Sigmoid colon (tissue), 7 donors: ENCODE measurements at regions of chr2 and their contacts with region 1.

Region 1: DNA sequence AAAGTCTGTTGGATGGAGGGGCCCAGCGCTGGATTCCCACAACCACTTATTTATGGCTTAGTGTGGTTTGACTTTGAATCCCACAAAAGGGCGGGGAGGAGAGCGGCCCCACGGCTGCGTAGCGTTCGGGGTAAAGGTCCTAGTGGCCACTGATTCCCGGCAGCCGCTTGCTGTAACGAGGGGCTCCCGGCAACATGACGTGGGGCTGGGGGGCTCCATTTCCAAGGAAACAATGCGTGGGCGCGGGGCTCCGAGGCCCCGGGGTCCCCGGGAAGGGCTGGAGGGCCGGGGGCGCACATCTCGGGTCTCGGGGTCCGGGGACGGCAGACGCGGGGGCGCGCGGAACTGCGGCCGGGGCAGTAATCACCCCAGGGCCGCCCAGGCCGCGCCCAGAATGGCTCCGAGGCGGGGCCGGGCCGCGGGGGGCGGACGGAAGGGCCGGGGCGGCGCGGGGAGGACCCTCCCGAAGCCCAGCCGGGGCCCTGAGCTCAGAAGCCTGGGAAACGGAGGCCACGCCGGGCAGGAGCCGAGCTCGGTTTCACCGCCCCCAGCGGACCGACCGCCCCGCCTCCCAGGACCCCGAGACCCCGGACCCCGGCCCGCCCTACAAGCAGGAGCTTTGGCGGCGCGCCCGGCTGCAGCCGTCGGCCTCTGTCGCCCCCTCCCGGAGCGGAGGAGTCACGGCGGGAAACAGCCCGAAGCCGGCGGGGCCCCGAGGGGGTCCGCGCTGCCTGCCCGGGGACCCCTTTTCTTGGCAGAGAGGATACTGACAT is 11.9 kb upstream of the MLPH start:
- DNase-seq: peak; percentile 95
- H3K4me3 ChIP-seq: peak overlapping the region; percentile 45 to 85 (median 66)
- H3K27ac ChIP-seq: peak overlapping the region; percentile 85 to 96 (median 91)
- H3K4me1 ChIP-seq: peaks cover 0 to 44% (median 28%) of the 10 kb centered on the region in 4 donors
- H3K27me3 ChIP-seq: no peaks in the 10 kb centered on the region
- CTCF ChIP-seq: peak; percentile 87 to 97 (median 89)
- EP300 ChIP-seq: no peak
- POLR2A ChIP-seq: peak; percentile 4 to 25

Region 2: GRCh38 chr2:237092920-237093781 is 382.0 kb before region 1 on chr2:
- intact Hi-C with region 1: loop called (anchors 2 kb)
- DNase-seq: peak; percentile 88
- H3K4me3 ChIP-seq: no peak overlapping the region
- H3K27ac ChIP-seq: peak overlapping the region; percentile 68 to 82 (median 80)
- H3K4me1 ChIP-seq: peaks cover 0 to 57% (median 29%) of the 10 kb centered on the region in 4 donors
- H3K27me3 ChIP-seq: no peaks in the 10 kb centered on the region
- CTCF ChIP-seq: peak; percentile 55 to 81 (median 68)
- EP300 ChIP-seq: peak in 2 of 4 donors; percentile 37 to 51
- POLR2A ChIP-seq: no peak

Region 3: DNA sequence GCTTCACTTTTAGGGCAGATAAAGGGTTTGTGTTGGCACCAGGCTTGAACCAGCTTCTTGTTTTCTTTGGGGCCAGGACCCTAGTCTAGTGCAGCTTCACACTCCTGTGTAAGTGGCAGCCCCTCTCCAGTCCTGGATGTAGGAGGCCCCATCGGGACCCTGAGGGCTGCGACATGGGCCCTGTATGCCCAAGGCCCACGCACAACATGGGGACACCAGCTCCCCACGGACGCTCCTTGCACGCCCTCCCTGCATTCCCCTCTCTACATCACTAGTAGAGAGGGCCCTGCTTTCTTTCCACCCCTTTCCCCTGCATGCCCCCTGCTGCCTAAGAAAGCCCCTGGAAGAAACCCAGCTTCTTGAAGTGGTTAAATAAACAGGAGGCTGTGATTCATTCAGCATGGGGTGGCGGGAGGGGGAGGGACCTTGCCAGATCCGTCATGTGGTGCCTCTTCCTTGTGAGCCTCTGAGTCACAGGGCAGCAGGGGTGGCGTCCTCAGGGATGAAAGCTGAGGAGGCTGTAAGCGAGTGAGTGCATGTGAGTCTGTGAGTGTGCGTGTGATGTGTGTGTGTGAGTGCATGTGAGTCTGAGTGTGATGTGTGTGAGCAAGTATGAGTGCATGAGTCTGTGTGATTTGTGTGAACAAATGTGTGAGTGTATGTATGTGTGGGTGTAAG is 347.0 kb before region 1 on chr2:
- intact Hi-C with region 1: loop called (anchors 2 kb)
- DNase-seq: peak; percentile 99
- H3K4me3 ChIP-seq: peak overlapping the region in 2 of 4 donors; percentile 2 to 14
- H3K27ac ChIP-seq: peak overlapping the region; percentile 58 to 93 (median 87)
- H3K4me1 ChIP-seq: peaks cover 0 to 71% (median 54%) of the 10 kb centered on the region in 4 donors
- H3K27me3 ChIP-seq: no peaks in the 10 kb centered on the region
- CTCF ChIP-seq: no peak
- EP300 ChIP-seq: peak in 3 of 4 donors; percentile 88 to 99 (median 89)
- POLR2A ChIP-seq: no peak

Region 4: DNA sequence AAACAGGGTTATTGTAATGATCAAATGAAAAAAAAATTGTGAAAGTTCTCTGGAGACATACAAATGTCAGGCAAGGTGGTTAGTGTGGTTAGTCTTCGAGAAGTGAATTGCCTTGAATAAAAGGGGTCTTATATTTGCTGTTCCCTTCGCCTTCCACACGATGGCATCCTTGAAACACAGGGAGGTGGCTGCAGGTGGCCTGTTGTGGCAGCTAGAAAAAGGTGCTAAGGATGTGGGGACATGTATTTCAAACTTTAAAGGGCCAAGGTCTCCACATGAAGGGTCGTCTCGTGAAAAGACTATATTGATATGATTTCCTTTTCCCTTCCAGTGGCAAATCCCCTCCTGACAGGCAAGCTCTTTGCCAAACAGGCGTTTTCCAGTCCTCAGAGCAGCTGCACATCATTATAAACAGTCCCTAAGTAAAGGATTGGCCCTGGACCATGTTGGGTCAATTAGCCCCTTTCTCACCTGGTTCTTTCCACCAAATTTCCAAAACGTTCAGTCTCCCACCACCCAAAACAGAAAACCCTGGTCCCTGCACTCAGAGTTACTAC is 321.0 kb before region 1 on chr2:
- intact Hi-C with region 1: loop called (anchors 2 kb)
- DNase-seq: no peak
- H3K4me3 ChIP-seq: no peak overlapping the region
- H3K27ac ChIP-seq: peak overlapping the region in 3 of 4 donors; percentile 17 to 75 (median 73)
- H3K4me1 ChIP-seq: peaks cover 0 to 39% (median 25%) of the 10 kb centered on the region in 4 donors
- H3K27me3 ChIP-seq: no peaks in the 10 kb centered on the region
- CTCF ChIP-seq: peak; percentile 40 to 63 (median 45)
- EP300 ChIP-seq: no peak
- POLR2A ChIP-seq: no peak

Region 5: GRCh38 chr2:237171396-237171795 is 303.7 kb before region 1 on chr2:
- intact Hi-C with region 1: loop called (anchors 5 kb)
- DNase-seq: peak; percentile 83
- H3K4me3 ChIP-seq: peak overlapping the region in 3 of 4 donors; percentile 2 to 21 (median 9)
- H3K27ac ChIP-seq: peak overlapping the region; percentile 64 to 78 (median 74)
- H3K4me1 ChIP-seq: peaks cover 0 to 24% (median 21%) of the 10 kb centered on the region in 4 donors
- H3K27me3 ChIP-seq: no peaks in the 10 kb centered on the region
- CTCF ChIP-seq: peak in 1 of 4 experiments; percentile 13
- EP300 ChIP-seq: no peak
- POLR2A ChIP-seq: no peak

Region 6: GRCh38 chr2:237298151-237299118 is 176.7 kb before region 1 on chr2:
- intact Hi-C with region 1: loop called (anchors 5 kb)
- DNase-seq: no peak
- H3K4me3 ChIP-seq: no peak overlapping the region
- H3K27ac ChIP-seq: peak overlapping the region; percentile 11 to 90 (median 86)
- H3K4me1 ChIP-seq: peaks cover 0 to 76% (median 58%) of the 10 kb centered on the region in 4 donors
- H3K27me3 ChIP-seq: no peaks in the 10 kb centered on the region
- CTCF ChIP-seq: no peak
- EP300 ChIP-seq: peak in 3 of 4 donors; percentile 11 to 60 (median 44)
- POLR2A ChIP-seq: no peak

Region 7: DNA sequence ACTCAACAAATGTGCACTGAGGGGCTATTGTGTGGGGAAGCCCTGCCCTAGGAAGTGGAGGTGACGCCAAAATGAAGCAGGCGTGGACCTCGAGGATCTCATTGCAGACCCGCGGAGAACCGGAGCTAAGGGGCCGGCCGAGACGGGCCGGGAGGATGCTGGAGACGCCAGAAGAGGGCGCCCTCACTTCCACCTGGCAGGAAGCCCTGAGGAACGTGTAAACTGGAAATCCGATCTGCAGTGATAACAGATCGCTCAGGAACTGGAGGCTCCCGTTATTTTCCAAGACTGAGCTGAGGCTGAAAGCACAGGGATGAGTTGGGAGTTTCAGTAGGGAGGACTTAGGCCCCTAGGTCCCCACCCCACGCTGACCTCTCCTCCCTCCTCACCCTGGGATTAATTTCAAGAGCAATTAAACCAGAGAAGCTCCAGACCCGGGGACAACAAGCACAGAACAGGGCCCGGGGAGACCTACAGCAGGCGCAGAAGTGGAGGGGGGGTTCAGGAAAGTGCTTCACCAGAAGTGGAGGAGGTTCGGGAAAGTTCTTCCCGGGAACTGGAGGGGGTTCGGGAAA is 53.5 kb before region 1 on chr2:
- intact Hi-C with region 1: loop called (anchors 2 kb)
- DNase-seq: peak; percentile 94
- H3K4me3 ChIP-seq: peak overlapping the region in 3 of 4 donors; percentile 19 to 29 (median 26)
- H3K27ac ChIP-seq: peak overlapping the region; percentile 67 to 78 (median 73)
- H3K4me1 ChIP-seq: peaks cover 0 to 19% (median 14%) of the 10 kb centered on the region in 4 donors
- H3K27me3 ChIP-seq: no peaks in the 10 kb centered on the region
- CTCF ChIP-seq: peak; percentile 63 to 84 (median 76)
- EP300 ChIP-seq: peak in 1 of 4 donors; percentile 11
- POLR2A ChIP-seq: no peak

Region 8: DNA sequence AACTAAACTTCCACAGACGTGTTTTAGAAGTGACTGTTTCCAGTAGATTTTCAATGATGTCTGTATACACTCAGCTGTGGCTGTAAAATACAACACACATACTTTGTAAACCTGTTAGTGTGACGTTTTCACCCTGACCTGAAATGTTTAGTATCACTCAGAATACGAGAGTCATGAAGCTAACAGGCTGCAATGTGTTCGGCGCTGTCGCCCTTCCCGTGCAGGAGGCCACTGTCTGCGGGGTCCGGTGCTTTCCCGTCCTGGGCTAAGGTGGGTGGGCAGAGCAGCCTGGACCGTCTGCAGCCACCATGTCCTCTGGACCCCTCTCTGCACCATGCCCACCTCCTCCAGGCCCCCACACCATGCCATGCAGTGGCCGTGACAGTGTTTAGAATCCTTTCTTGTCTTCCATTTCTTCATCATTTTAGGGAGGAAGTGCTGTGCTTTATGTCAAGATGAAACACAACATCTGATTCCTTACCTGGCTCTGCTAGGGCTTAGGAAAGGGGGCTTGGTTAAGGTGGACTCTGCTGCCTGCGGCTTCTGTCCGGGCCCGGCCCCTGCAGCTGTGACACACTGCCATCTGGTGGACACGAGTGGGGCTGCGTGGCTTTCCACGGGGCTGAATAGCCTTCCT is 269.6 kb after region 1 on chr2:
- intact Hi-C with region 1: no loop called
- DNase-seq: peak; percentile 88
- H3K4me3 ChIP-seq: no peak overlapping the region
- H3K27ac ChIP-seq: peak overlapping the region; percentile 52 to 92 (median 77)
- H3K4me1 ChIP-seq: peaks cover 0 to 59% (median 57%) of the 10 kb centered on the region in 4 donors
- H3K27me3 ChIP-seq: no peaks in the 10 kb centered on the region
- CTCF ChIP-seq: peak; percentile 94 to 98 (median 96)
- EP300 ChIP-seq: no peak
- POLR2A ChIP-seq: no peak